Panc1 (cell line): ENCODE measurements at regions of chr19 and their contacts with region 1.

Region 1: GRCh38 chr19:43940719-43941118 is 5.6 kb upstream of the ZNF45 start:
- DNase-seq: no peak
- ATAC-seq: no peak
- H3K4me3 ChIP-seq: no peak overlapping the region
- H3K27ac ChIP-seq: no peak overlapping the region
- H3K4me1 ChIP-seq: 0 out of 2 replicates have a peak, but pooled peaks cover 2% of the 10 kb centered on the region
- H3K27me3 ChIP-seq: no peaks in the 10 kb centered on the region
- CTCF ChIP-seq: no peak

Region 2: GRCh38 chr19:43966079-43966694 is 25.5 kb after region 1 on chr19:
- CTCF ChIA-PET with region 1: interaction called, 12 read pairs
- POLR2A ChIA-PET with region 1: no interaction called
- in situ Hi-C with region 1: no loop called
- intact Hi-C with region 1: no loop called
- DNase-seq: no peak
- ATAC-seq: no peak
- H3K4me3 ChIP-seq: no peak overlapping the region
- H3K27ac ChIP-seq: no peak overlapping the region
- H3K4me1 ChIP-seq: no peaks in the 10 kb centered on the region
- H3K27me3 ChIP-seq: no peaks in the 10 kb centered on the region
- CTCF ChIP-seq: no peak

Region 3: GRCh38 chr19:43983912-43984686 is 43.4 kb after region 1 on chr19 and contains the start of gene ZNF155:
- CTCF ChIA-PET with region 1: no interaction called
- POLR2A ChIA-PET with region 1: no interaction called
- in situ Hi-C with region 1: no loop called
- intact Hi-C with region 1: no loop called
- DNase-seq: peak; percentile 78
- ATAC-seq: peak; percentile 100
- H3K4me3 ChIP-seq: peak within 1 kb of the TSS; percentile 65 to 82
- H3K27ac ChIP-seq: peak within 1 kb of the TSS; percentile 78
- H3K4me1 ChIP-seq: no peaks in the 10 kb centered on the region
- H3K27me3 ChIP-seq: no peaks in the 10 kb centered on the region
- CTCF ChIP-seq: no peak
- total RNA-seq, gene ZNF155: 5.0 TPM

Region 4: GRCh38 chr19:44083866-44084265 is 143.1 kb after region 1 on chr19:
- CTCF ChIA-PET with region 1: no interaction called
- POLR2A ChIA-PET with region 1: no interaction called
- in situ Hi-C with region 1: no loop called
- intact Hi-C with region 1: no loop called
- DNase-seq: no peak
- ATAC-seq: no peak
- H3K4me3 ChIP-seq: no peak overlapping the region
- H3K27ac ChIP-seq: no peak overlapping the region
- H3K4me1 ChIP-seq: no peaks in the 10 kb centered on the region
- H3K27me3 ChIP-seq: no peaks in the 10 kb centered on the region
- CTCF ChIP-seq: no peak